ENCODE measurements at regions of chr12 and their contacts with region 1.

Region 1: GRCh38 chr12:121443193-121443870 is 43.4 kb downstream of the RNF34 start:
- DNase-seq: peak; percentile 54 to 96
- H3K4me3 ChIP-seq: no peak overlapping the region
- H3K27ac ChIP-seq: no peak overlapping the region
- H3K4me1 ChIP-seq: peaks cover 0 to 2% (median 0%) of the 10 kb centered on the region in 4 experiments; a peak in 4 of 7 replicates
- H3K27me3 ChIP-seq: no peaks in the 10 kb centered on the region
- CTCF ChIP-seq: peak in 2 of 3 experiments; percentile 94 to 95; a peak in 3 of 4 replicates
- EP300 ChIP-seq: no peak
- POLR2A ChIP-seq: no peak
- RAD21 ChIP-seq: peak; percentile 61 to 74

Region 2: DNA sequence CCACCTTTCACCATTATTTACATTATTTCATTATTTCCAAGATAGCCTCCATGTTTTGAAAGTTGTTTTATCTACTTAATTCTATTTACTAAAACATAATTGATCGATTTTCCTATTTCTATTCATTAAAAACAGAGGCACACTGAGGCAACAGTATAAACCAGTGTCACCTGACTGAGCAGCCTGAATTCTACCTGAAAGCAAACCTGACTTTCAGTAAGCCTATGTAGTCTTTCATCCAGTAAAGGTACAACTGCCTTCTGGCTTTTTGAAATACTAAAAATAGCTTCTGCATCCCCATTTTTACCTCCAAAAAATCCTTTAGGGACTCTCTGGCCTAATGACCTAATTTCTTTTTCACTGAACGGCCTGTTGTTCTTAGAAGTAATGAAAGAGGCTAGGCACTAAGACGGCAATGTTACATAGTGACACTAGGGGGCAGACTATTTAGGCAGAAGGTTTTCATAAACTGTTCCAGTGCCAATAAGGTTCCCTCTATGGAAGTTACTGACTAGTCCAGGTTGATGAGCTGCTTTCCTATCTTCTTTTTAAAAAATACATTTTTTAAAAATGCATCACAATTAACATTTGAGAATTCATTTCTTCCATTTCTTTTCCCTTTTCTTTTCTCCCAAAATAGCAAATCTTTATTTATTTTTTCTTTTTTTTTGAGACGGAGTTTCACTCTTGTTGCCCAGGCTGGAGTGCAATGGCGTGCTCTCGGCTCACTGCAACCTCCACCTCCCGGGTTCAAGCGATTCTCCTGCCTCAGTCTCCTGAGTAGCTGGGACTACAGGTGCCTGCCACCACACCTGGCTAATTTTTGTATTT is 108.6 kb before region 1 on chr12:
- CTCF ChIA-PET with region 1: interaction called, 17 read pairs
- POLR2A ChIA-PET with region 1: interaction called, 3 read pairs
- DNase-seq: no peak
- H3K4me3 ChIP-seq: no peak overlapping the region
- H3K27ac ChIP-seq: no peak overlapping the region
- H3K4me1 ChIP-seq: 0 out of 7 replicates have a peak, but pooled peaks cover 0 to 3% (median 0%) of the 10 kb centered on the region in 4 experiments
- H3K27me3 ChIP-seq: no peaks in the 10 kb centered on the region
- CTCF ChIP-seq: peak in 2 of 3 experiments; percentile 57 to 87; a peak in 3 of 4 replicates
- EP300 ChIP-seq: no peak
- POLR2A ChIP-seq: no peak
- RAD21 ChIP-seq: peak; percentile 50 to 63

Region 3: DNA sequence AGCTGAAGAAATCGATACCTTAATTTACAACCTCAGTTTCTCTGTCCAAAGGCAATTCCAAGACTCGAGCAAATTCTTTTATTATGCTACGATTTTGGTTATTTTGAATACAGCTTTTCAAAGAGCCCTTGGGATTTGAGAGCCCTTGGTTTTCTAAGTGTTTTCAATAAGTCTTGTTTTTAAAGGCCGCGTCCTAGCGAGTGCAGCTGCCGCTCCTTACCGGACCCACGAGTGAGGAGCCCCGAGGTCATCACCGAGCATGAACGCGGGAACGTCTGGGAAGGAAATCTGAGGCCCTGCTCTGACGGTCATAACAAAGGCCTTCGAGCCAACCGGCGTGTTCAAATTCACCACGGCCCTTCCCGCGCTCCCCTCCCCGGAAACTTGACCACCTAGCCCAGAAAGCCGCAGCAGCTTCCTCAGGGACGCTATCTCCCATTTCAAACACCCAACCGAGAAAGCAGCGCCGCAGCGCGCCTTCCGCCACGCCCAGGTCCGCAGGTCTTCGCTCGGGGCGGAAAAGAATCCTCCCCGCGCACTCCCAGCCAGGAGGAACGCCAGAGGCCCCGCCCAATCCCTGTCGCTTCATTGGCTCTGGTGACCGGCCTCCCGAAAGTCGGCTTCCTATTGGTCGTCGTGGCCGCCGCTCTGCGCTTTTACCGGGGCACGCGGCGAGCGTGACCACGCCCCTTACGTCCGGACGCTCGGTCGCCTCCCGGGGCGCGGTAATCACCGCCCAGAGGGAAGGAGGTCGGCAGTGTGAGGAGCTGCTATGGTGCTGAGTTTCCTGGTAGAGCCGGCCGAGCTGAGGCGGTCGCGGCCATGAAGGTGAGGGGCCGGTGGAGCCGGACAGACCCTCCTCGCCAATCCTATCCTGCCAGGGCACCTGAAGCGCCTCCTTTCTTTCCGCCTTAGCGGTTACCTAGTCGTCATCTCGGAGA is 43.7 kb before region 1 on chr12 and contains the start of gene RNF34:
- CTCF ChIA-PET with region 1: interaction called, 18 read pairs
- POLR2A ChIA-PET with region 1: interaction called, 3 read pairs
- DNase-seq: peak; percentile 94 to 98
- H3K4me3 ChIP-seq: peak within 1 kb of the TSS; percentile 76 to 87 (median 86)
- H3K27ac ChIP-seq: peak within 1 kb of the TSS; percentile 83
- H3K4me1 ChIP-seq: peaks cover 0 to 4% (median under 1%) of the 10 kb centered on the region in 4 experiments; a peak in 1 of 7 replicates
- H3K27me3 ChIP-seq: no peaks in the 10 kb centered on the region
- CTCF ChIP-seq: no peak
- EP300 ChIP-seq: no peak
- POLR2A ChIP-seq: peak; percentile 87 to 92; a peak in 2 of 3 replicates
- RAD21 ChIP-seq: no peak
- total RNA-seq, gene RNF34: 56.2 and 57.6 TPM in 2 replicates

Region 4: GRCh38 chr12:121423682-121424623 is 19.4 kb before region 1 on chr12:
- CTCF ChIA-PET with region 1: interaction called, 51 read pairs
- POLR2A ChIA-PET with region 1: interaction called, 8 read pairs
- DNase-seq: no peak
- H3K4me3 ChIP-seq: no peak overlapping the region
- H3K27ac ChIP-seq: no peak overlapping the region
- H3K4me1 ChIP-seq: no peaks in the 10 kb centered on the region
- H3K27me3 ChIP-seq: no peaks in the 10 kb centered on the region
- CTCF ChIP-seq: no peak
- EP300 ChIP-seq: no peak
- POLR2A ChIP-seq: peak in 1 of 2 experiments; percentile 0; a peak in 1 of 3 replicates
- RAD21 ChIP-seq: no peak

Region 5: DNA sequence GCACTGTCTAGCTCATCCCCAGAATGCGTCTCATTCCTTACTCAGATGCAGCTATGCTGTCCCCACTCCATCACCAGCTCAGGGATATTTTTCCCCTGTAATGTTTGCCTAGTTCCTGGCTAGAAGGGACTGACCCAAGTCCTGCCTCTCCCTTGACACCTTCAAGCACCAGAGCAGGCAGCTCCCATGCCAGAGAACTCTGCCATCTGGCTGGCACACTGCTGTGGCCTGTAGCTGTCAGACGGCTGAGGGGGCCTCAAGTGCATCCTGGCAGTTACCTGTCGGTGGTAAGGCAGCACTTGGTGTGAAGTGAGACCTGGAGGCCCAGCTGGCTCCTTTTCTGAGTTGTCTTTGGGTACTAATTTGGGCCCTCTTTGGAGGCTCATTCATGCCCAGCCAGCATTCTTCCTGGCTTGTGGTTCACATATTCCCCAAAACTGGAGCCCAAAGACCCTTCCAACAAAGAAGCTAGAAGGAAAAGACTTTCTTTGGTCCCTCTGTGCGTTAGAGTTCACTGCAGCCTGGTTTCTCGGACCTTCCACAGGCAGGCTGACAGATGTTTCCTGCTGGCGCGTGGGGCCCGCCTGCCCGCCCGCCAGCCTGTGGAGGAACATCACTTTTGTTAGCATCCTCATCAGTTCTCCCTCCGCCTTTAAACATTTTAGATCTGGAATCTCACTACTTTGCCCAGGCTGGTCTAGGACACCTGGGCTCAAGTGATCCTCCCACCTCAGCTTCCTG is 10.4 kb before region 1 on chr12:
- CTCF ChIA-PET with region 1: interaction called, 51 read pairs
- POLR2A ChIA-PET with region 1: interaction called, 4 read pairs
- DNase-seq: no peak
- H3K4me3 ChIP-seq: no peak overlapping the region
- H3K27ac ChIP-seq: no peak overlapping the region
- H3K4me1 ChIP-seq: no peaks in the 10 kb centered on the region
- H3K27me3 ChIP-seq: no peaks in the 10 kb centered on the region
- CTCF ChIP-seq: no peak
- EP300 ChIP-seq: no peak
- POLR2A ChIP-seq: no peak
- RAD21 ChIP-seq: no peak

Region 6: DNA sequence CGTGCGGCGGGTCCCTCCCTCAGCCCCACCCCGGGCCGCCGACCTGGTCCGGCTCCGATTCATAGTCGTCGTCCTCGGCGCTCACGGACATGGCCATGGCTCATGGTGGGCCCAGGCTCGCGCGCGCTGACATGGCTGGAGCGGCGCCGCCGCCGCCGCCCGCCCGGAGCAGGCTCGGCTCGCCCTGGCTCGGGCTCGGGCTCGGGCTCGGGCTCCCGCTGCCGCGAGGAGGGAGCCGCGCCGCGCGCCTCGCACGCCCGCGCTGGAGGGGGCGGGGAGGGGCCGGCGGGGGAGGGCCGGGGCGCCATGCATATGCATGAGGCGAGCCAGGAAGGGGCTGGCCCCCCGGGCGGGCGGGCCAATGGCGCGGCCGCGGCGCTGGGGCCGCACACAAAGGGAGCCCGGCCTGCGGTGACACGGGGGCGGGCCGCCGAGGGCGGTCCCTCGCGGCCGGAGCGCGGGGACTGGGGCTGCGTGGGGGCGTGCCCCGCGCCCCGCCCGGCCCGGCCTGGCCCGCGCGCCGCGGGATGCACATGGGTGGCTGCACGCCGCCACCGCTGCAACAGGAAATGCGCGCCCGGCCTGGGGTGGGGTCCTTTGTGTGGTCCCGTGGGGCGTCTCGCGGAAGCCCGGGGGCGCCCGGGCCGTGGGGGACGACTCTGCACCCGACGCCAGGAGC is 23.9 kb after region 1 on chr12:
- CTCF ChIA-PET with region 1: interaction called, 129 read pairs
- POLR2A ChIA-PET with region 1: interaction called, 5 read pairs
- DNase-seq: peak; percentile 41 to 86
- H3K4me3 ChIP-seq: peak overlapping the region; percentile 57 to 80 (median 64)
- H3K27ac ChIP-seq: peak overlapping the region; percentile 66; the same call in 1 of the 2 replicates
- H3K4me1 ChIP-seq: peaks cover 0 to 12% (median 2%) of the 10 kb centered on the region in 4 experiments; a peak in 4 of 7 replicates
- H3K27me3 ChIP-seq: peaks cover 0 to 6% (median 0%) of the 10 kb centered on the region in 4 experiments; a peak in 2 of 7 replicates
- CTCF ChIP-seq: no peak
- EP300 ChIP-seq: no peak
- POLR2A ChIP-seq: no peak
- RAD21 ChIP-seq: no peak

Region 7: DNA sequence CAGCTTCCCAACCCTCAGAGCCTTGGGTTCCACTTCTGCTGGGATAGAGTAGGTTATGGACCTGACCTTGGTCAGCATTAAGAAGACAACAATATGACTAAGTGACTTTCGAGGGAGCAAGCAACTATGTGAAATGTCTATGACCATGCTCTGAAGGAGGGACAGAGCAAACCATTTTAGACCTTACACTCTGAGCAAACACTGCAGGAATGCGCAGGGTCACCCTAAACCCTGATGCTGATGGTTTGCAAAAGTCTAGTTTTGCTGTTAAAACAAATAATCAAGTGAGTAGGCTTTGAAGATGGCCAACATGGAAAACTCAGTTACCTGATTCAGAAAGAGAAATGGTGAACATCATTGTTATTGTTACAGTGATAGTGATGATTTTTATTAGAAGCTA is 1048.7 kb after region 1 on chr12:
- CTCF ChIA-PET with region 1: no interaction called
- POLR2A ChIA-PET with region 1: no interaction called
- DNase-seq: no peak
- H3K4me3 ChIP-seq: no peak overlapping the region
- H3K27ac ChIP-seq: no peak overlapping the region
- H3K4me1 ChIP-seq: no peaks in the 10 kb centered on the region
- H3K27me3 ChIP-seq: no peaks in the 10 kb centered on the region
- CTCF ChIP-seq: no peak
- EP300 ChIP-seq: no peak
- POLR2A ChIP-seq: no peak
- RAD21 ChIP-seq: no peak

Measured in H1 (cell line).